Breast epithelium (tissue), 4 donors: ENCODE measurements at regions of chr4 and their contacts with region 1.

Region 1: DNA sequence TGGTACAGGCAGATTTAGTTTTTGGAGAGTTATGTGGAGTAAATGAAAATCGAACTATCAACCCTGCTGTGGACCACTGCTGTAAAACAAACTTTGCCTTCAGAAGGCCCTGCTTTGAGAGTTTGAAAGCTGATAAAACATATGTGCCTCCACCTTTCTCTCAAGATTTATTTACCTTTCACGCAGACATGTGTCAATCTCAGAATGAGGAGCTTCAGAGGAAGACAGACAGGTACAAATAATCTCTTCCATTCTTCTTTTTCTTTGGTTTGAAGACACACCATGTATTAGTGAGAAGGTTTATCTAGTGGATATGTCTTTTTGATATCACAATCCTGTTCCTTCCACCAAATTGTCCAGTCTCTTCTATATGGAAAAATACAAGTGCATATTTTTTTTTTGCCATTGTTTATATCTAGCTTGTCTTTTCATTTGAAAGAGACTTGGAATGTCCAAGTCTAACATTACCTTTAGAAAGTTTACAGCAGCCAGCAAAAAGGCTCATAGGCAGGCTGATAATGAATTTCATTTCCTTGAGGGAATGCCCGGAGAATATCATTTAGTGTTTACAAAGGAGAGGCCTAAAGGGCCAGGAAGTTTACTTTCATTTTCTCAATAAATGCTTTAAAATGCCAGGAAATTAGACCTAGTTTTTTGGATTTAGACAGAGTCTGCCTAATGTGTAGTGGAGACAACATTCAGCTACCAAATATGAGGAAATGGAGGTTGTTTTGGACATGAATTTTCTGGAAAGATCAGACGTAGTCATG is 18.6 kb downstream of the AFM start:
- DNase-seq: no peak
- H3K4me3 ChIP-seq: no peak overlapping the region
- H3K27ac ChIP-seq: no peak overlapping the region
- H3K4me1 ChIP-seq: no peaks in the 10 kb centered on the region
- H3K27me3 ChIP-seq: no peaks in the 10 kb centered on the region
- CTCF ChIP-seq: no peak
- POLR2A ChIP-seq: no peak

Region 2: DNA sequence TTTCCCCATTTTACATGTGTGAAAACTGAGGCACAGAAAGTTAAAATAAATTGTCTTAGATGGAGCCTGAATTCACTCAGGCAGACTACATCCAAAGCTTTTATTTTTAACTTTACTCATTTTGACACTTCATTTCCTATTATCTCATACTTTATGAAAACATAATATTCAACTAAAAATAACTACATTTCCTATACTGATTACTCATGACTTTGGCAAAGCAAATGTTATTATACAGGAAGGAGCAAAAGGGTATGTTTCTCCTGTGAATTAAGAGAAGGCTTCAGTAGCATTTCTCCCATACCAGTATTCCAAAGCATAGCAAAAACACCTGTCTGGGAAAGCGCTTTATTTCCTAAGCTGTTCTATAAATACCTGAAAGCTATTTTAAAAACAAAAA is 1109.8 kb before region 1 on chr4:
- intact Hi-C with region 1: loop called (anchors 10 kb)
- DNase-seq: no peak
- H3K4me3 ChIP-seq: no peak overlapping the region
- H3K27ac ChIP-seq: no peak overlapping the region
- H3K4me1 ChIP-seq: no peaks in the 10 kb centered on the region
- H3K27me3 ChIP-seq: no peaks in the 10 kb centered on the region
- CTCF ChIP-seq: no peak
- POLR2A ChIP-seq: no peak

Region 3: DNA sequence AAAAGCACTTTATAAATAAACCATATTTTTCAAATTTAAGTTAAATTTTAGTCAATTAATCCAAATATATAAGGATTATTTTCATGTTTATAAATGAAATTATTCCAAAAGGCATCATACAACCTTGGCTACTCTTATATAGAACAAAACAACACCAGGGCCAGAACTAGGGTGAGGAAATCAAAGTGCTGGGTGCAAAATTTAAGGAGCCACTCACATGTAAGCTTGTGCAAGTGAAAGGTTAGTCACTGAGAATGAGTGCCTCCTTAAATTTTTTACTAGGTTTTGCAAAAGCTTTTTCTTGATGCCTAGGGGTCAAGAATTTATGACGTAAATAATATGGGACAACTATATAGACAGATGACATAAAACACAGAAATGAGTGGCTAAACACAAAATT is 347.3 kb before region 1 on chr4:
- intact Hi-C with region 1: no loop called
- DNase-seq: no peak
- H3K4me3 ChIP-seq: no peak overlapping the region
- H3K27ac ChIP-seq: no peak overlapping the region
- H3K4me1 ChIP-seq: no peaks in the 10 kb centered on the region
- H3K27me3 ChIP-seq: no peaks in the 10 kb centered on the region
- CTCF ChIP-seq: no peak
- POLR2A ChIP-seq: no peak

Region 4: GRCh38 chr4:73520821-73521220 is 20.6 kb after region 1 on chr4:
- intact Hi-C with region 1: no loop called
- DNase-seq: no peak
- H3K4me3 ChIP-seq: no peak overlapping the region
- H3K27ac ChIP-seq: no peak overlapping the region
- H3K4me1 ChIP-seq: no peaks in the 10 kb centered on the region
- H3K27me3 ChIP-seq: no peaks in the 10 kb centered on the region
- CTCF ChIP-seq: no peak
- POLR2A ChIP-seq: no peak

Region 5: GRCh38 chr4:74451200-74451661 is 951.0 kb after region 1 on chr4:
- intact Hi-C with region 1: no loop called
- DNase-seq: no peak
- H3K4me3 ChIP-seq: no peak overlapping the region
- H3K27ac ChIP-seq: no peak overlapping the region
- H3K4me1 ChIP-seq: no peaks in the 10 kb centered on the region
- H3K27me3 ChIP-seq: no peaks in the 10 kb centered on the region
- CTCF ChIP-seq: no peak
- POLR2A ChIP-seq: no peak